Activated naive CD4-positive, alpha-beta T cell treated with anti-CD3 and anti-CD28 coated beads for 36 hours (primary cell): ENCODE measurements at regions of chr11 and their contacts with region 1.

Region 1: DNA sequence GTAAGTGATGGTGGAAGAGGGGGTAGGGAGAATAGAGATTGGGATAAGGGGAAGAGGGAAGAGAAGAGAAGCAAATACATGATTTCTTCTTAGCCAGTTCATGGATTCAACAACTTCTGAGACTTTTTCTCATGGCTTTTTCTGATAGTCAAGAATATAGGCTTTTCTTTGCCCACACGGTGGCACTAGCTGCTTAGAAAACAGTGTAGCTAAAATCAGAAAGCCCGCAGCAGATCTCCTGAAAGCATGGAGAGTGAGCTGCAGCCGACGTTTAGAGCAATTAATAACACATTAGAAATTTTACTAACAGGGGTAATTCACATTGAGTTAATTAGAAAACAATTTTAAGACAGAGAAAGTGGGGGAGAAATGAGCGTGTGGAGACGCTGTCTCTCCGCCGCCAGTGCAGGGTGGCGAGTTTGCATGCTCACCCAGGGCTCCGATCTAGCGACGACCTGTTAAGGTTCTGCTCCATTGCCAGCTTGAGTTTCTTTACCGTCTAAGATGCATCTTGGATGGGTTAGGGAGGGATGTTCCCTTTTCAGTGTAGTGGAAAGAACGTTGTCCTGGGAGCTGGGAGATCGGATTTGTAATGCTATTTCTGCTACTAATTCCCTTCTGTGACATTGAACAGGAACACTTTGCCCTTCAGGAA is 3.3 kb upstream of the RAG1 start:
- DNase-seq: peak; percentile 65
- H3K4me3 Mint-ChIP-seq: peak overlapping the region; percentile 47
- H3K27ac Mint-ChIP-seq: no peak overlapping the region
- H3K4me1 Mint-ChIP-seq: peaks cover 2% of the 10 kb centered on the region
- H3K27me3 Mint-ChIP-seq: peaks cover 24% of the 10 kb centered on the region

Region 2: GRCh38 chr11:36577859-36578258 is 13.4 kb after region 1 on chr11:
- CTCF ChIA-PET with region 1: interaction called, 15 read pairs
- intact Hi-C with region 1: no loop called
- DNase-seq: no peak
- H3K4me3 Mint-ChIP-seq: no peak overlapping the region
- H3K27ac Mint-ChIP-seq: no peak overlapping the region
- H3K4me1 Mint-ChIP-seq: no peaks in the 10 kb centered on the region
- H3K27me3 Mint-ChIP-seq: peaks cover 5% of the 10 kb centered on the region

Region 3: GRCh38 chr11:36594316-36594989 is 29.9 kb after region 1 on chr11 and contains the start of gene IFTAP:
- CTCF ChIA-PET with region 1: no interaction called
- intact Hi-C with region 1: no loop called
- DNase-seq: peak; percentile 44
- H3K4me3 Mint-ChIP-seq: peak within 1 kb of the TSS; percentile 79
- H3K27ac Mint-ChIP-seq: no peak within 1 kb of the TSS
- H3K4me1 Mint-ChIP-seq: peaks cover 9% of the 10 kb centered on the region
- H3K27me3 Mint-ChIP-seq: peaks cover 20% of the 10 kb centered on the region
- total RNA-seq, gene IFTAP: 4.2 to 5.0 TPM

Region 4: DNA sequence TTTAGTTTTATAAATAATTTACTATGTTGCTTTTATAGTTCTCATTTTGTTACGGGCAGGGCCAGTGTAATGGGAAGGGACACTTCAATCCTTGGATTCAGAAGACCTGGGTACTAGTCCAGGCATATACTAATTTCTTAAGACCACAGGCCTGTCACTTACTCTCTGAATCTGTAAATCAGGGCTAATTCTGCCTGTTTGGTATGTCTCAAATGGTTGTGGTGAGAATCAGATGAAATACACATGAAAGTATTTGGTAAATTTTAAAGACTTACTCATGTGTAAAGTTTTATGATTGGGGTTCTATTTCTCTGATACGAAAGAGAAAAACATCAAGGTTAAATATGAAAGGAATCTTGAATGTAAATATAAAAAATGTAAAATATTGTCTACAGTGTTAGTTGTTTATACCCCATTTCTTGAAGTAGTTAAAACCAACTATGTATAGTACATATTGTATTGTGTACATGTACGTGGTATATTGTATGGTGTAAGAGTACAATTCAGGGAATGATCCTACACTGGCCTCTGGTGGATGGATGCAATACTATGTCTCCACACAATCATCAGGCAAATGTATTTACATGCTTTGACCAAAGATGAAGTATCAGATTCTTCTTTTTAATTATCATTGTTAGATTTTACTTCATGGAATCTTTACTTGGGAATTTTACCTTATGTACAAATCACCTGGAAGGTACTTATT is 58.1 kb after region 1 on chr11:
- CTCF ChIA-PET with region 1: interaction called, 5 read pairs
- intact Hi-C with region 1: loop called (anchors 1 kb)
- DNase-seq: peak; percentile 20
- H3K4me3 Mint-ChIP-seq: no peak overlapping the region
- H3K27ac Mint-ChIP-seq: no peak overlapping the region
- H3K4me1 Mint-ChIP-seq: peaks cover 3% of the 10 kb centered on the region
- H3K27me3 Mint-ChIP-seq: peaks cover 5% of the 10 kb centered on the region

Region 5: DNA sequence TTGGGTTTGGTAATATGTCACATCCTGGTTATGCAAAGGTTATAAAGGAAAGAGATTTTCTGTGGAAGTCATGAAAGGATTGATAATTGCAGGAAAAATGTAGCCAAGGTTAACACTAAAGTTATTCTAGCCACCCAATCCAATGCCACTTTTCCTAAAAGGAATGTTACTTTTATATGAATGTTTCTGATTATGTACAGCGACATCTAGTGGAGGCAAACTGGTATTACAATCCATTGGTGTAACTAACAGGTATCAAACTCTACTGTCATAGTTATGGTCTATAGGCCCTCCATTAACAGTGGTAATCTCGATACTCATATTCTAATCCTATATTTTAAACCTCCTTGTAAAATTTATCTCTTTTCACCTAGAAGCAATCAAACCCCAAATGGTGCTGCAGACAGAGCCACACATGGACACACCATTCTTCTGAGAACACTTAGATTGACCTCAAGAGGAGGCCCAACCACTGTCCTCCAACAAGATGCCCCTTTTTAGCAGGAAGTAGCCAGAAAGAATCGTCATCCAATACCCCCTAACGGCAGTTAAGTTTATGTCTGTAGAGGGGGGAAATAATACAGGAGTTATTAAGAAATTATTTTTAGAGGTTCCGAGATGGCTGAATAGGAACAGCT is 108.4 kb after region 1 on chr11:
- CTCF ChIA-PET with region 1: interaction called, 45 read pairs
- intact Hi-C with region 1: loop called (anchors 1 kb)
- DNase-seq: peak; percentile 14
- H3K4me3 Mint-ChIP-seq: no peak overlapping the region
- H3K27ac Mint-ChIP-seq: no peak overlapping the region
- H3K4me1 Mint-ChIP-seq: no peaks in the 10 kb centered on the region
- H3K27me3 Mint-ChIP-seq: peaks cover 21% of the 10 kb centered on the region

Region 6: GRCh38 chr11:37124384-37124783 is 559.9 kb after region 1 on chr11:
- CTCF ChIA-PET with region 1: no interaction called
- intact Hi-C with region 1: no loop called
- DNase-seq: no peak
- H3K4me3 Mint-ChIP-seq: no peak overlapping the region
- H3K27ac Mint-ChIP-seq: no peak overlapping the region
- H3K4me1 Mint-ChIP-seq: no peaks in the 10 kb centered on the region
- H3K27me3 Mint-ChIP-seq: no peaks in the 10 kb centered on the region